ENCODE measurements at regions of chr9 and their contacts with region 1.

Region 1: GRCh38 chr9:87678650-87679515 is 47.0 kb upstream of the CTSL start:
- DNase-seq: peak in 1 of 2 donors; percentile 84
- H3K4me3 ChIP-seq: no peak overlapping the region
- H3K27ac ChIP-seq: no peak overlapping the region
- H3K4me1 ChIP-seq: no peaks in the 10 kb centered on the region
- H3K27me3 ChIP-seq: no peaks in the 10 kb centered on the region
- CTCF ChIP-seq: peak; percentile 39 to 70 (median 58)
- POLR2A ChIP-seq: no peak

Region 2: GRCh38 chr9:87812375-87813118 is 133.7 kb after region 1 on chr9:
- intact Hi-C with region 1: loop called (anchors 5 kb)
- DNase-seq: no peak
- H3K4me3 ChIP-seq: no peak overlapping the region
- H3K27ac ChIP-seq: no peak overlapping the region
- H3K4me1 ChIP-seq: no peaks in the 10 kb centered on the region
- H3K27me3 ChIP-seq: no peaks in the 10 kb centered on the region
- CTCF ChIP-seq: peak in 2 of 3 experiments; percentile 70
- POLR2A ChIP-seq: no peak